ENCODE measurements at regions of chr1 and their contacts with region 1.

Region 1: DNA sequence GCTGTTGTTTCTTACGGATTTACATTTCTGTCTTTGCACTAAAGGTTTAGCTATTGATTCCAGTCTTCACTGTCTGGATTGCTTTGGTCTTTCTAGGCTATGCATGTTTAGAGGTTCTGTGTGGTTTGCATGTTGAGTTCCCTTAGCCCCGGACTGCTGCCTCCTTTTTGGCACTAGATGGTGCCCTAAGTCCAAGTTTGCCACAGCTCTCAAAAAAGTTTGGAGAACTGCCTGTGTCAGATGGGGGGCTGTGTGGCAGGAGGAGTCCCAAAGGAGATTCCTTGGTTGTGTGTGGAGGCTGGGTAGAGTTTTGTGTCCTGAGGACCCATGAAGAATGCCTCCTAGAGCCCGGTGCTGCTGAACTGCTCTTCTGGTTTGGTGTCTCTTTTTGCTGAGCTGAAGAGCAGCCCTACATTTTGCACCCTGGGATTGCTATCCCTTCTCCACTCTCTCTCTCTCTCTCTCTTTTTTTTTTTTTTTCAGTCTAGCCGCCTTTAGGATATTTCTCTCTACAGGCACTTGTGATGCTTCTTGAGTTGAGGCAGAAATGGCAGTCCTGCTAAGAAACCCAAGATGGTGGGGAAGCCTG is 74.4 kb downstream of the PTGS2 start:
- DNase-seq: peak; percentile 75
- H3K4me3 ChIP-seq: no peak overlapping the region
- H3K27ac ChIP-seq: no peak overlapping the region
- H3K4me1 ChIP-seq: no peaks in the 10 kb centered on the region
- H3K27me3 ChIP-seq: no peaks in the 10 kb centered on the region
- CTCF ChIP-seq: peak; percentile 75 to 83
- POLR2A ChIP-seq: no peak

Region 2: DNA sequence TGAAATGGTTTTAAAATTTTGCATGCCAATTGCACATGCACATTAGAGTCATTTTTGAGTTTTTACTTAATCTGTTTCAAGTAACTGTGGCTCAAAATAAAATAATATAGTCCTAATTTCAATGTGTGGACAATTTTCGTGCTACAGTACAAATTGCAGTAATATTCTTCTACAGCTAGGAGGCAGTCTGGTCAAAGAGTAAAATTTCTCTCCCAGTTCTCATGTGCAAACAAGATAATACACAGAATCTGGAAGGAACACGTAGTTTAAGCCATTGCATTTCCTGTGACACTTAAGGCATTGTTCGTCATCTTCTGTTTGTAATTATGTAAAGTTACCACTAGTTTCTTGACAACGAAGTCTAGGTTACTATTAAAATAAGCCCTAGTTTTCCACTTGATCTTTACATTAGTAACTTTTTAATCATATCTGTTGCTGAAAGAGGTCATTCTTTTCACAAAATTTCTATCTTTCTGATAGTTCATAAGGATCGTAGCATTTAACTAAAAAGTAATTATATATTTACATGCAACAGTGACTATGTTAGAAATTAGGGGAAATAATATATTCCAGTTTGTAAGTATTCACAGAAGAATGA is 201.3 kb before region 1 on chr1:
- CTCF ChIA-PET with region 1: interaction called, 17 read pairs
- POLR2A ChIA-PET with region 1: no interaction called
- dilution Hi-C with region 1: no loop called
- intact Hi-C with region 1: loop called (anchors 1 kb)
- DNase-seq: peak; percentile 89
- H3K4me3 ChIP-seq: no peak overlapping the region
- H3K27ac ChIP-seq: peak overlapping the region; percentile 89
- H3K4me1 ChIP-seq: peaks cover 6% of the 10 kb centered on the region
- H3K27me3 ChIP-seq: no peaks in the 10 kb centered on the region
- CTCF ChIP-seq: peak; percentile 47 to 66
- POLR2A ChIP-seq: no peak

Region 3: GRCh38 chr1:186494832-186495271 is 111.0 kb before region 1 on chr1:
- CTCF ChIA-PET with region 1: no interaction called
- POLR2A ChIA-PET with region 1: no interaction called
- dilution Hi-C with region 1: no loop called
- intact Hi-C with region 1: loop called (anchors 5 kb)
- DNase-seq: no peak
- H3K4me3 ChIP-seq: no peak overlapping the region
- H3K27ac ChIP-seq: no peak overlapping the region
- H3K4me1 ChIP-seq: peaks cover 36% of the 10 kb centered on the region
- H3K27me3 ChIP-seq: no peaks in the 10 kb centered on the region
- CTCF ChIP-seq: no peak
- POLR2A ChIP-seq: no peak

Region 4: DNA sequence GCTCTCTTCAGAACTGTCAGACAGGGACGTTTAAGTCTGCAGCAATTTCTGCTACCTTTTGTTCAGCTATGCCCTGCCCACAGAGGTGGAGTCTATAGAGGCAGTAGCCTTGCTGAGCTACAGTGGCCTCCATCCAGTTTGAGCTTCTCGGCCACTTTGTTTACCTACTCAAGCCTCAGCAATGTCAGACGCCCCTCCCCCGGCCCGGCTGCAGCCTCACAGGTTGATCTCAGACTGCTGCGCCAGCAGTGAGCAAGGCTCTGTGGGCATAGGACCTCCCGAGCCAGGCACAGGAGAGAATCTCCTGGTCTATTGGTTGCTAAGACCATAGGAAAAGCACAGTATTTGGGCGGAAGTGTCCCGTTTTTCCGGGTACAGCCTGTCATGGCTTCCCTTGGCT is 55.0 kb before region 1 on chr1:
- CTCF ChIA-PET with region 1: no interaction called
- POLR2A ChIA-PET with region 1: no interaction called
- dilution Hi-C with region 1: no loop called
- intact Hi-C with region 1: no loop called
- DNase-seq: no peak
- H3K4me3 ChIP-seq: no peak overlapping the region
- H3K27ac ChIP-seq: no peak overlapping the region
- H3K4me1 ChIP-seq: no peaks in the 10 kb centered on the region
- H3K27me3 ChIP-seq: no peaks in the 10 kb centered on the region
- CTCF ChIP-seq: no peak
- POLR2A ChIP-seq: no peak

Region 5: GRCh38 chr1:186722711-186723309 is 117.0 kb after region 1 on chr1:
- CTCF ChIA-PET with region 1: interaction called, 15 read pairs
- POLR2A ChIA-PET with region 1: no interaction called
- dilution Hi-C with region 1: no loop called
- intact Hi-C with region 1: no loop called
- DNase-seq: peak; percentile 52
- H3K4me3 ChIP-seq: no peak overlapping the region
- H3K27ac ChIP-seq: no peak overlapping the region
- H3K4me1 ChIP-seq: no peaks in the 10 kb centered on the region
- H3K27me3 ChIP-seq: no peaks in the 10 kb centered on the region
- CTCF ChIP-seq: peak; percentile 55 to 56
- POLR2A ChIP-seq: no peak

Region 6: DNA sequence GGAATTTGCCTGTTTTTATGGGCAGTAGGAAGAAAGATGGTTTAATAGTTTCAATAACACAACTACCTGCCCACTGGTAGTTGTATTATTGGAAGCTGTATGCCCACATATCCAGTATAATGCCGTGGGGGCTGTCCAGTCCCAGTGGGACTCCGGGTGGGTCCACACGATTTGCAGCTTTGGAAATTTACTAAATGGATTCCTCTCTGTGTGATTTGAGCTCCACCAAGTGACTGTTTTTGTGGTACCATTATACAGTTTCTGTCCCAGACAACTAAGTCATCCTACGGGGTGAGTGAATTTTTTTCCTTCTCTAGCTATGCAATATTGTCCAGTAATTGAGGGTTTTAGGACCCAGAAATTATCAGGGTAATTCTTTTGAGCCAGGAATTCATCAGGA is 309.7 kb after region 1 on chr1:
- CTCF ChIA-PET with region 1: interaction called, 7 read pairs
- POLR2A ChIA-PET with region 1: no interaction called
- dilution Hi-C with region 1: no loop called
- intact Hi-C with region 1: loop called (anchors 1 kb)
- DNase-seq: peak; percentile 20
- H3K4me3 ChIP-seq: no peak overlapping the region
- H3K27ac ChIP-seq: no peak overlapping the region
- H3K4me1 ChIP-seq: peaks cover 20% of the 10 kb centered on the region
- H3K27me3 ChIP-seq: no peaks in the 10 kb centered on the region
- CTCF ChIP-seq: no peak
- POLR2A ChIP-seq: no peak

Region 7: GRCh38 chr1:187051618-187052232 is 445.9 kb after region 1 on chr1:
- CTCF ChIA-PET with region 1: no interaction called
- POLR2A ChIA-PET with region 1: no interaction called
- dilution Hi-C with region 1: no loop called
- intact Hi-C with region 1: loop called (anchors 2 kb)
- DNase-seq: peak; percentile 62
- H3K4me3 ChIP-seq: no peak overlapping the region
- H3K27ac ChIP-seq: no peak overlapping the region
- H3K4me1 ChIP-seq: no peaks in the 10 kb centered on the region
- H3K27me3 ChIP-seq: no peaks in the 10 kb centered on the region
- CTCF ChIP-seq: peak; percentile 28 to 33
- POLR2A ChIP-seq: no peak